ENCODE measurements at regions of chr9 and their contacts with region 1.

Region 1: GRCh38 chr9:117205806-117206205 is 209.1 kb downstream of the ASTN2 start:
- DNase-seq: no peak
- H3K4me3 ChIP-seq: no peak overlapping the region
- H3K27ac ChIP-seq: no peak overlapping the region
- H3K4me1 ChIP-seq: no peaks in the 10 kb centered on the region
- H3K27me3 ChIP-seq: no peaks in the 10 kb centered on the region
- CTCF ChIP-seq: no peak
- POLR2A ChIP-seq: no peak

Region 2: DNA sequence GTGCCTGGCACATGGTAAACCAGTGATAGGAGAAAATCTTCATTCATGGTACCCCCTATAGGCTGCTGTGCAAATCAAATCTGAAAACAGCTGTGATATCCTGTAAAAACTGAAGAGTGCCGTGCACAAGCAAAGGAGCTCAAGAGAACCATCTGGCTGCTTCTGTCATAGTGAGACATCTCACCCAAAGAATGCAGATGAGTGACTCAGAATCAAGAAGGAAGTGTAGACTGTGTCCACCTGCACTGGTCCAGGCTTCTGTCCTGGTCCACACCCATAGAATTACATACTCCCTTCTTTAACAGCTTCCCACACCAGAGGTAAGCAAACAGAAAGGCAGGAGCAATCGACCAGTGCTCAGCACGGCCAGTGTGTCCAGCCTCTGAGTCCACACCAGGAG is 13.1 kb after region 1 on chr9:
- intact Hi-C with region 1: loop called (anchors 1 kb)
- DNase-seq: no peak
- H3K4me3 ChIP-seq: no peak overlapping the region
- H3K27ac ChIP-seq: no peak overlapping the region
- H3K4me1 ChIP-seq: no peaks in the 10 kb centered on the region
- H3K27me3 ChIP-seq: no peaks in the 10 kb centered on the region
- CTCF ChIP-seq: no peak
- POLR2A ChIP-seq: no peak

Measured in breast epithelium (tissue), 4 donors.